Dendritic cell treated with granulocyte-macrophage colony-stimulating factor and Interleukin-4, amounts not matched to agents 40 ng/mL and 50 ng/mL, for 4 days (primary cell): ENCODE measurements at regions of chr17 and their contacts with region 1.

Region 1: DNA sequence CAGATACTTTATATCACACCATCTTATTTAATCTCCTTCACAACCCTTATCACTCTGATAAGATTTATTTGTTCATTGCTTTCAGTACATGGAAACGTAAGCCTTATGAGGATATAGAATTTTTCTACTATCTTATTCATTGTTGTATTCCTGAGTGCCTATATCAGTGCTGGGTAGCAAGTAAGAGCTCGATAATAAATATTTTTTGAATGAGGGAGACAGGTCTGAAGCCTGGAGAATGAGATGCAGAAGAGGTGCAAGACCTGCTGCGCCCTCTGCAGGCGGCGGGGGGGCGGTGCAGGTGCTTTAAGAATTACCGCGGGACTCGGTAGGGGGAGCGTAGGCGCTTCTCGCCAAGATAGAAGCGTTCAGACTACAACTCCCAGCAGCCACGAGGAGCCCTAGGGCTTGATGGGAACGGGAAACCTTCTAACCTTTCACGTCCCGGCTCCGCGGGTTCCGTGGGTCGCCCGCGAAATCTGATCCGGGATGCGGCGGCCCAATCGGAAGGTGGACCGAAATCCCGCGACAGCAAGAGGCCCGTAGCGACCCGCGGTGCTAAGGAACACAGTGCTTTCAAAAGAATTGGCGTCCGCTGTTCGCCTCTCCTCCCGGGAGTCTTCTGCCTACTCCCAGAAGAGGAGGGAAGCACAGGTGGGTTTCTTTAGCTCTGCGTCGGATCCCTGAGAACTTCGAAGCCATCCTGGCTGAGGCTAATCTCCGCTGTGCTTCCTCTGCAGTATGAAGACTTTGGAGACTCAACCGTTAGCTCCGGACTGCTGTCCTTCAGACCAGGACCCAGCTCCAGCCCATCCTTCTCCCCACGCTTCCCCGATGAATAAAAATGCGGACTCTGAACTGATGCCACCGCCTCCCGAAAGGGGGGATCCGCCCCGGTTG is at the start of gene WRAP53:
- H3K4me3 Mint-ChIP-seq: peak within 1 kb of the TSS; percentile 98
- H3K27ac Mint-ChIP-seq: peak within 1 kb of the TSS; percentile 98
- H3K4me1 Mint-ChIP-seq: peaks cover 47% of the 10 kb centered on the region
- H3K27me3 Mint-ChIP-seq: no peaks in the 10 kb centered on the region

Region 2: GRCh38 chr17:7572588-7573323 is 115.4 kb before region 1 on chr17:
- intact Hi-C with region 1: loop called (anchors 5 kb)
- H3K4me3 Mint-ChIP-seq: peak overlapping the region; percentile 85
- H3K27ac Mint-ChIP-seq: peak overlapping the region; percentile 95
- H3K4me1 Mint-ChIP-seq: peaks cover 80% of the 10 kb centered on the region
- H3K27me3 Mint-ChIP-seq: no peaks in the 10 kb centered on the region

Region 3: DNA sequence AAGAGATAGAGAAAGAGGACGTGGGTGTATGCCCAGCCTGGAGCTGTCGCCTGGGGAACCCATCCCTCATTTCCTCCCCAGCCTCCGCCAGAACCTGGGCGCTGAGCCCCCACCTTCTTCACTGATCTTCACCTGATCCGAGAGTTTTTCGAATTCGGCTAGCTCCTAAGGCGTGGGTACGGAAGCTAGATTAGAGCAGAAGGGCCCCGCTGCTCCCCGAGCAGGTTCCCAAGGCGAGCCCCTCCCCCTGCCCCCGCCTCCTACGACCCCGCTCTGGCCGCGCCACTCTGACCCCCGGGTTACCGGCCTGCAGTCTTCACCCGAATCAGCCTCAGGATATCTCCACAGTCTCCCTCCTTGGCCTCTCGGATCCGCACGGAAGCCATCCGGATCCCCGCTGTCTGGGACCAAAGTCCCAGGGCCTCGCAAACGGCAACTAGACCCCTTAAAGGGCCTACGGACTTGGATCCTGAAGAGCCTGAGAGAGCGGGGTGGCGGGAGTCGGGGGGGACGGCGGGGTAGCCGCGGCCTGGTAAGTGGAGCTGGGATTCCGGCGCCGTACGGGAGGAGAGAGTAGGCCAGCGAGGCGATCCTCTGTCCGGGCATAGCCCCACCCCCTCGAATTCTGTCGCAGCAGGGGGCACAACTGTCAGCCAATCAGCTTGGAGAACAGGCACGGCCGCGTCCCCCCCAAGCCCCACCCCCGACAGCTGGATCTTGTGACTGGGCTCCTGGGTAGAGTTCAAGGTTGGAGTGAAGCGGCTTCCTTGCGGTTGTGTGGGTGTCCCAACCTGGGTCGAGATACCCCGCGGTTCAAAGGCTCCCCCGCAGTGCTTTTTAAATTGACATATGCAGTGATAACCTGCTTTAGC is 60.7 kb before region 1 on chr17 and contains the start of gene SAT2:
- intact Hi-C with region 1: loop called (anchors 1 kb)
- H3K4me3 Mint-ChIP-seq: peak within 1 kb of the TSS; percentile 92
- H3K27ac Mint-ChIP-seq: peak within 1 kb of the TSS; percentile 96
- H3K4me1 Mint-ChIP-seq: peaks cover 18% of the 10 kb centered on the region
- H3K27me3 Mint-ChIP-seq: no peaks in the 10 kb centered on the region

Region 4: GRCh38 chr17:7632492-7632894 is 55.7 kb before region 1 on chr17:
- intact Hi-C with region 1: loop called (anchors 1 kb)
- H3K4me3 Mint-ChIP-seq: no peak overlapping the region
- H3K27ac Mint-ChIP-seq: peak overlapping the region; percentile 49
- H3K4me1 Mint-ChIP-seq: peaks cover 5% of the 10 kb centered on the region
- H3K27me3 Mint-ChIP-seq: peaks cover 11% of the 10 kb centered on the region